Lower leg skin (tissue), 4 donors: ENCODE measurements at regions of chr2 and their contacts with region 1.

Region 1: DNA sequence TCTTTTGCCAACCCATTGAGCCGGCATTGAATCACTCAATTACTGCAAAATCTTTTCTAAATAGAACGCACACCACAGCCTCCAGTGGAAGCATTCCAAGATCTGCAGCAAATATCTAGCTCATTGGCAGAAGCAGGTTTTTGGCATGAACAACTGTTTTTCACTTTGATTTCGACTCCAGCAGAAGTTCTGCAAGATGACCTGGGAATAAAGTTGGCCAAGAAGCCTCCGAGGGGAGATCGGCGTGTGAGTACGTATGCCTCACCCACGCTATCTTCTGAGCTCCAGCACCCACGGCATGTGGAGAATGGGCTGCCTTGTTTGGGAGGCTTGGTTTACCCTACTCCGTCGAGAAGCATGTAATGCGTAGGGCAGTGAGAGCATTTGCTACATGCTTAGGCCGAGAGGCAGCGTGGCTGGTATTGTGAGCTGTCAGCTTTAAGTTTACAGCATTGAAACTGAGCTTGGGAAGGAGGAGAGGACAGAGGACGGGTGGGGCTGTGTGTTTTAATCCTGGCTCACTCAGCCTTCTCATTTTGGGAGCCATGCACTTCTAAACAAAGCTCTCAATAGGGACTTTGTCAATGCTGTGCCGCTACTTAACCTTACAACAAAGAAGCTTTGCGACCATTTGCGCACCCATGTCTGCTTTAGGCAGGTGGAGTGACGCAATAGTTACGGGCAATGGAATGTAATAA is 10.5 kb downstream of the PCARE start:
- DNase-seq: peak in 1 of 2 donors; percentile 76
- H3K4me3 ChIP-seq: no peak overlapping the region
- CTCF ChIP-seq: no peak
- POLR2A ChIP-seq: no peak

Region 2: DNA sequence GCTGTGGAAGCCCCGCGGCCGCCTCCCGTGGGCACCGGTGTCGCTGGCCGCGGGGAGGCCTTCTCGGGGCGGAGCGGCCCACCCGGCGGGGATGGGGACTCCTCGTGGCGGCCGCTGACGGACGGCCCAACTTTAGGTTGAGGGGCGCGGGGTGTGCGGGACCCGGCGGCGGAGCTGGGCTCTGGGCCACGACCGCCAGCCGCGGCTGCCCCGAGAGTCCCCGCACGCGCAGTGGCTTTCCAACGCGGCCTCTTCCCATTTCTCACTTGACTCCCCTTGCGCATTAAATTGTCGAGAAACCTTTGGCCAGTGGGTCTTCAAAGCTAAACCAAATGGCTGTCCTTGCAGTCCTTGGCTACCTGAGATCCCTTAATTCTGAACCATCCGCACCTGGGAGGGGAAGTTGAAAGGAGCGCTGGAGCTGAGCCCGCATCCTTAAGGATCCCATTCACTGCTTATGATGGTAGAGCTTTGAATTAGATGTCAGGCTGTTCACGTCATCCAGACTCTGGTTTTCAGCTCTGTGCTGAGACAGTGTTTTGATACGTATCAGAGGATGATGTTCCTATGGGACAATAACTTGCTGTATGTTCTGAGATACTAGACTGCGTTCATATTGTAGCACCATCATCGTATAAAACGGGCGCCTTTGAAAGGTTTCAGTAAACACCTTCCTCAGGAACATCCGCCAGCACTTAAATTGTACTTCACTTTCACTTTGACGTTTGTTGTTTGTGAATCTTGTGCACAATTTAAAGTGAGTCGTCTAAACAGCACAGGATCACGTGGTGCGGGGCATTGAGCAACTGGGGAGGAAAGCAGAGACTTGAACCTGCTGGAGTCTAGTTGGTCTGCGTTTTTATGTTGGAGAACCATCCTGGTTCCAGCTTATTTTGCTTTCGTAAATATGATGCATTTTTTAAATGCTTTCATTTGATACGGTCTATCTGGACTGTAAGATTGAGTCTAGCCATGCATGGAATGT is 52.3 kb after region 1 on chr2:
- intact Hi-C with region 1: loop called (anchors 10 kb)
- DNase-seq: peak; percentile 84 to 95
- H3K4me3 ChIP-seq: peak overlapping the region; percentile 57
- CTCF ChIP-seq: no peak
- POLR2A ChIP-seq: no peak